Posterior cingulate gyrus (tissue), 11 donors: ENCODE measurements at regions of chr9 and their contacts with region 1.

Region 1: GRCh38 chr9:117411548-117411947 is 3.3 kb downstream of the ASTN2 start:
- DNase-seq: peak; percentile 36 to 95 (median 74)

Region 2: GRCh38 chr9:116737152-116737546 is 674.4 kb before region 1 on chr9:
- intact Hi-C with region 1: loop called (anchors 5 kb)
- DNase-seq: peak; percentile 74 to 98 (median 89)

Region 3: DNA sequence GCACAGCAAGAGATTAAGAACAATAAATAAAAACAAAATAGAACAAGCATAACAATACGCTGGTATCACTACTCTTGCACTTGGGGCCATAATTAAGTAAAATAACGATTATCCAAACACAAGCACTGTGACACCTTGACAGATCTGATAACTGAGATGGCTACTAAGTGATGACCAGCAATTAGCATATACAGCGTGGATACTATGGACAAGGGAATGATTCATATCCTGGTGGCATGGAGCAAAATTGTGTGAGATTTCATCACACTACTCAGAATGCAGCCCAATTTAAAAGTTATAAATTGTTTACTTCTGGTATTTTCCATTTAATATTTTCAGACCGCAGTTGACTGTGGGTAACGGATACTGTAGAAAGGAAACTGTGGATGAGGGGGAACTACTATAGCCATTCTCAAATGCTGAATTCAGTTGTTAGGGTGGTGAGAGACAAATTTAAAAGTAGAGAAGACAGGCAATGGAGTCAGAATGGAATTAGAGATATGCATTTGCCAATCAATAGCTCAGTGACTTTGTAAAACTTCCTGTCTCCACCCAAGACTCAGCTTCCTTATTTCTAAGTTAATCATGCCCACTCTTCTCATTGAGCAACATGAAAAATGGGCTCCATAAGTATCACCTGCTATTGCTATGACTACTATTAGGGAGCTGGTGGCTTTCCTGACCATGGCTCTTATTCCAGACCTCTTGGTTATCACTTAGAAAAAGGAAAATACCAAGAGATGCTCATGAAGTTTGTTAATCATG is 423.6 kb before region 1 on chr9:
- intact Hi-C with region 1: no loop called
- DNase-seq: no peak

Region 4: DNA sequence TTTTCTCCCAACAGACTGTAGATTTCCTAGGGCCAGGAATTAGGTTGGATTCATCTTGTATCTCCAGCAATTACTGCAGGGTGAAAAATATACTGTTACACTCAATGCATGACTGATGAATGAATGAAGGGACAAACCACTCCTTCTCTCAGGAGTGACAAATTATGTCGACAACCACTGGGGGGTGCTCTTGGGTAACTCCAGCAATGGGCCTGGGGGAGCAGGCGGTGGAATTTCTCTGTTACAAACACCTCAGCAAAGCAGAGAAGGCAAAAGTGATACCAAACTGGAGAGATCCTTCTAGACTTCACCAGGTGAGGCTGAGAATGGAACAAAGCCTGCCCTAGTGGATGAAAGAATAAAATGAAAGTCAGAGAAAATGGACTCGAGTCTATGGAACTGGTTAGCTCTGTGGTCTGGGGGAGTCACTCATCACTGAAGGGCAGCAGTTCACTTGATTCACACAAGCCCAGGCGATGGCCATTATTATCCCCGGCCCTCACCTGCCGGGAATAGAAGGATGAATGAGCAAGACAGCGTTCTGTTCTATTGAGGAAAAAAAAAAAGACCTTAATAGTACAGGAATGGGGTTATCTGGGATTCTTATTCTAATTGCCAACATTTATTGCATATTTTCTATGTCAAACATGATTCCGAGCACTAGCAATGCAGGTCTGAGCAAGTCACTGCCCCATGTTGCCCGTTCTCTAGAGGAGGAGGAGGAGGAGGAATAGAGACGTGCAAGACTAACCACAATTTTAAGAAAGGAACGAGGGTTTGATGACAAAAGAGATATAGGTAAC is 337.8 kb before region 1 on chr9:
- intact Hi-C with region 1: loop called (anchors 2 kb)
- DNase-seq: peak in 8 of 10 donors; percentile 60 to 90 (median 71)

Region 5: GRCh38 chr9:117247266-117247665 is 164.3 kb before region 1 on chr9:
- intact Hi-C with region 1: loop called (anchors 1 kb)
- DNase-seq: peak in 1 of 10 donors; percentile 18

Region 6: DNA sequence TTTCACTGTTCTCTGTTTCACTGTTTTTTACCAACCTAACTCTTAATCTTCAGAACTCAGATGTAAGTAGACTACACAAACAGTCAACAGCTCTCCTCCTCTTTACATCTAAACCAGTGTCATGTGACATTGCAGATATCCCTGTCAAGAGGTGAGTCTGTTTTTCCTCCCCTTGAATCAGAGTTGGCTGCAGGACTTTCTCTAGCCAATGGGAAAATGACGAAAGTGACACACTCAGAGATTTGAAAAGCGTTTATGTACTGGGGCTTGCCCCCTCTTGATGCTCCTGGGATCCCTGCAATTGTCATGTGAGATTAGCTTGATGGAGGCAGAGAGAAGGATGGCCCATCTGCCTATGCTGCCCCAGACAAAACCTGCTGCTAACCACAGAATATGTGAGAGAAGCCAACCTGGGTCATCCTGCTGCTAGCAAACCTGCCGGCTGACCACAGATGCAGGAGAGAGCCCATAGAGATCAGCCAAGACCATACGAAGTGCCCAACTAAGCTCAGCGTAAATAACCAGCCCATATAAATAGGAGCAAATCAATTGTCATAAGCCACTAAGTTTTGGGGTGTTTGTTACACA is 107.8 kb before region 1 on chr9:
- intact Hi-C with region 1: no loop called
- DNase-seq: no peak

Region 7: GRCh38 chr9:117464941-117465616 is 53.5 kb after region 1 on chr9:
- intact Hi-C with region 1: loop called (anchors 2 kb)
- DNase-seq: peak; percentile 80 to 97 (median 88)

Region 8: DNA sequence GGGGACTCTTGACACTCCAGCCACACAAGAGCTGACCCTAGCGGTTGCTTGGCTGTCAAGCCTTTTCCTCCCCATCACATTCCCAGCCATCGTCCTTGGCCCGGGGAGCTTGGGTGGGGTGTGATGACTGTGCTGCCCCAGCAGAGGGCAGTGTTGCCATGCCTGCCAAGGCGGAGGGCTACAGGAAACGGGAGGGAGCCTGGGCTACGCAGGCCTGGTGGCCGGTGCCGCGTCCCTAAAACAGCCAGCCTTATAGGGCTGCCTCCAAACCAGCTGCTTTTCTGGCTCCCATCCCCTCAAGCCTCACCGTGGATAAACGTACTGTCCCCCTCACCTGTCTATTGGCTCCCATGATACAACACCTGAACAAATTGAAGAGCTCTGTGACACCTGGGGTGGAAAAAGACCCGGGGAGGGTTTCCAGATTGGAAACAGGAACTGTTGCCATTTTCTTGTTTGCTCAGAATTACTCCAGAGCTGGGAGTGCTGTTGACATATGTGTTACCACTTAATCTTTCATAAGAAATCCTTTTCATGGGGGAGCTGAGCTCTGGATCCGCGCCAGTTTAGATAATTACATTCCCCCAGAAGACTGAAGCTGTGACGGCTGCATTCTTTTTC is 76.1 kb after region 1 on chr9:
- intact Hi-C with region 1: loop called (anchors 5 kb)
- DNase-seq: peak; percentile 60 to 97 (median 78)